Right cardiac atrium (tissue), 5 donors: ENCODE measurements at regions of chr3 and their contacts with region 1.

Region 1: DNA sequence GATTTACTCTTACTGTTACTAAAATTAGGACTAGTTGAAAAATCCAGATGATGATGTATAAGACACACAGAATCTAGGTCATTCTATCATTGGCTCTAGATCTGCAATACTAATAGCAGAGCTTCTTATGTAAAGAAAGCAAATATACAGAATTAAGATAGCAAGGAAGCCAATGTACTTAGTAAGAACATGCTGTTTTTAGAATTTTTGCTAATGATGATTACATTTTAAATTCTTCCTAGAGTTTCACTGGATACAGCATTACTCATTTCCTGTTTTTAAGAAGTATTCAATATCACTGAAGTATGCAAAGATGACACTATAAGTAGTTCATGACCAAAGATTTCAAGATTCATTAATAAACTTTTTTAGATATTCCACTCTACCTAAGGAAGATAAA is 60.7 kb downstream of the CFAP20DC start:
- DNase-seq: no peak
- ATAC-seq: no peak
- H3K4me3 ChIP-seq: no peak overlapping the region
- H3K27ac ChIP-seq: no peak overlapping the region
- H3K4me1 ChIP-seq: no peaks in the 10 kb centered on the region
- H3K27me3 ChIP-seq: no peaks in the 10 kb centered on the region

Region 2: DNA sequence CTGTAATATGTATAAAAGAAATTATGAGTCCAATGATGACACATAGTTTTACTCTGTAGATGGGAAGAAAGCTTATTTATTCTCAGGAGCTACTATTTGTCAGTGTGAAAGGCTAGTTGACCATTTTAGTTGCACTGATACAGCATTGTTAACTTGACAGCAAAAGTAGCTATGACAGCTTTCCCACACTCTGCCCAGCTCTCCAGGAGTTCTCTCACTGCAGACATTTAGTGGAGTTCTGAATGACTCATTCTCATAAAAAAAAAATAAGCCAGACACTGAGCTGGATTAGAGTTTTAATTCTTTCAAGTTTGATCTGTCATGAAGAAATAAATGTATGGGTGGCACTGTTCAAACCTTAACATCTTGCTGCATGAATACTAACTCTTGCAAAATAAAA is 137.9 kb after region 1 on chr3:
- intact Hi-C with region 1: no loop called
- DNase-seq: no peak
- ATAC-seq: no peak
- H3K4me3 ChIP-seq: no peak overlapping the region
- H3K27ac ChIP-seq: no peak overlapping the region
- H3K4me1 ChIP-seq: no peaks in the 10 kb centered on the region
- H3K27me3 ChIP-seq: no peaks in the 10 kb centered on the region

Region 3: GRCh38 chr3:59334585-59334984 is 345.4 kb after region 1 on chr3:
- intact Hi-C with region 1: loop called in 1 of 4 experiments (anchors 10 kb)
- DNase-seq: no peak
- ATAC-seq: no peak
- H3K4me3 ChIP-seq: no peak overlapping the region
- H3K27ac ChIP-seq: no peak overlapping the region
- H3K4me1 ChIP-seq: no peaks in the 10 kb centered on the region
- H3K27me3 ChIP-seq: no peaks in the 10 kb centered on the region

Region 4: GRCh38 chr3:59515975-59516374 is 526.8 kb after region 1 on chr3:
- intact Hi-C with region 1: no loop called
- DNase-seq: no peak
- ATAC-seq: no peak
- H3K4me3 ChIP-seq: no peak overlapping the region
- H3K27ac ChIP-seq: no peak overlapping the region
- H3K4me1 ChIP-seq: no peaks in the 10 kb centered on the region
- H3K27me3 ChIP-seq: no peaks in the 10 kb centered on the region